Naive thymus-derived CD4-positive, alpha-beta T cell (primary cell): ENCODE measurements at regions of chr9 and their contacts with region 1.

Region 1: GRCh38 chr9:97632985-97633858 is at the starts of genes NCBP1 and TSTD2:
- DNase-seq: peak; percentile 89 to 97 (median 96)
- ATAC-seq: peak; percentile 91
- H3K4me3 ChIP-seq: peak within 1 kb of the TSS; percentile 78
- H3K4me3 Mint-ChIP-seq: peak within 1 kb of the TSS; percentile 86 to 100 (median 96)
- H3K27ac ChIP-seq: peak within 1 kb of the TSS; percentile 88
- H3K27ac Mint-ChIP-seq: peak within 1 kb of the TSS; percentile 98 to 100 (median 99)
- H3K4me1 ChIP-seq: peaks cover 37 to 43% of the 10 kb centered on the region in 2 donors
- H3K4me1 Mint-ChIP-seq: peaks cover 41 to 82% (median 65%) of the 10 kb centered on the region in 7 donors
- H3K27me3 ChIP-seq: no peaks in the 10 kb centered on the region
- H3K27me3 Mint-ChIP-seq: no peaks in the 10 kb centered on the region
- total RNA-seq, gene NCBP1: 33.8 to 42.2 (median 40.6) TPM
- total RNA-seq, gene TSTD2: 15.2 to 23.3 (median 18.6) TPM

Region 2: GRCh38 chr9:96449845-96450612 is 1183.2 kb before region 1 on chr9 and contains the start of gene HABP4:
- CTCF ChIA-PET with region 1: no interaction called
- POLR2A ChIA-PET with region 1: no interaction called
- intact Hi-C with region 1: loop called in 1 of 2 experiments (anchors 1 kb)
- DNase-seq: peak; percentile 90 to 97 (median 95)
- ATAC-seq: peak; percentile 98
- H3K4me3 ChIP-seq: peak within 1 kb of the TSS; percentile 77
- H3K4me3 Mint-ChIP-seq: peak within 1 kb of the TSS; percentile 88 to 99 (median 93)
- H3K27ac ChIP-seq: peak within 1 kb of the TSS; percentile 74
- H3K27ac Mint-ChIP-seq: peak within 1 kb of the TSS; percentile 74 to 98 (median 94)
- H3K4me1 ChIP-seq: peaks cover 5 to 14% of the 10 kb centered on the region in 2 donors
- H3K4me1 Mint-ChIP-seq: peaks cover 19 to 33% (median 26%) of the 10 kb centered on the region in 7 donors
- H3K27me3 ChIP-seq: no peaks in the 10 kb centered on the region
- H3K27me3 Mint-ChIP-seq: peaks cover 0 to 41% (median 6%) of the 10 kb centered on the region in 5 donors
- total RNA-seq, gene HABP4: 6.6 to 40.3 (median 23.9) TPM

Region 3: DNA sequence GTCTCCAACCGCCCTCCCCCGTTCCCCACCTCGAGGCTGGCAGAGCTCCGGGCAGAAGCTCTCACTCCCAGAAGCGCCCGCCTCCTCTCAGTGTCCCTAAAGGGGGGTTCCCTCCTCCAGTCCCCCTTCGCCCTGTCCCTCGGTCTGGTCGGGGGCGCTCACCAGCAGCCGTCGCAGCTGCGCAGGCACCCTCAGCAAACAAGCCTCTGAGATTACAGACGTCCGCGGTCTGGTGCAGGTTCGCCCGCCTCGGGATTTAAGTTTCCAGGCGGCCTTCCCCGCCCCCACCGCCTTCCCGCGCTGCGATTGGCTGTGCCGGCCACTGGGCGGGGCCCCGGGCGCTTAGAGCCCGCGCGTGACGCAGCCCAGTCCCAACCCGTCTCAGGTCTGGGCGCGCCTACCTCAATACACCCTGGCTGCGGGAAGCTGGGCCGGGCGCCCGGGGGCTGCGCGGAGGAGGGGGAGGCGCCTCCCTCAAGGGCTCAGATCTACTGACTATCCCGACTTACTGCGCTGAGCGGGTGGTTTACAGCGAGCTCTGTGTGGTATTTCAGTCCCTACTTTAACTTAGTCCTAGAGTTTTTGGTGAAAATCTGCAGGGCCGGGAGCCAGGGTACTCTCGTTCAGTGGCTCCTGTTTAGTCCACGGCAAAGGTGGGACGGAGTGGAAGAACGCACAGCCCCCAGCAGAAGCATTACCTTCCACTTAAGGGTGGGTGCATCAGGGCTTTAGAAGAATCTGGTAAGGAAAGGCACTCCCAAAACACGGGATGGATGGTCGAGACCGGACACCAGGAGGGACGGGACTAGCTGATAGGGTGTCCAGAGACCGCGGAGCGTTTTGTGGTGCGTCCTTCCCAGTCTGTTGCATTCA is 594.1 kb before region 1 on chr9 and contains the start of gene CTSV:
- CTCF ChIA-PET with region 1: no interaction called
- POLR2A ChIA-PET with region 1: no interaction called
- intact Hi-C with region 1: loop called in 1 of 2 experiments (anchors 1 kb)
- DNase-seq: peak; percentile 47 to 88 (median 60)
- ATAC-seq: peak; percentile 98
- H3K4me3 ChIP-seq: peak within 1 kb of the TSS; percentile 52
- H3K4me3 Mint-ChIP-seq: peak within 1 kb of the TSS; percentile 54 to 87 (median 79)
- H3K27ac ChIP-seq: no peak within 1 kb of the TSS
- H3K27ac Mint-ChIP-seq: peak within 1 kb of the TSS in 2 of 9 donors; percentile 49 to 84
- H3K4me1 ChIP-seq: no peaks in the 10 kb centered on the region
- H3K4me1 Mint-ChIP-seq: peaks cover 3 to 11% (median 9%) of the 10 kb centered on the region in 7 donors
- H3K27me3 ChIP-seq: no peaks in the 10 kb centered on the region
- H3K27me3 Mint-ChIP-seq: peaks cover 36 to 55% (median 47%) of the 10 kb centered on the region in 5 donors
- total RNA-seq, gene CTSV: 0.21 to 0.24 TPM in 2 of 5 experiments, not detected in the others

Region 4: DNA sequence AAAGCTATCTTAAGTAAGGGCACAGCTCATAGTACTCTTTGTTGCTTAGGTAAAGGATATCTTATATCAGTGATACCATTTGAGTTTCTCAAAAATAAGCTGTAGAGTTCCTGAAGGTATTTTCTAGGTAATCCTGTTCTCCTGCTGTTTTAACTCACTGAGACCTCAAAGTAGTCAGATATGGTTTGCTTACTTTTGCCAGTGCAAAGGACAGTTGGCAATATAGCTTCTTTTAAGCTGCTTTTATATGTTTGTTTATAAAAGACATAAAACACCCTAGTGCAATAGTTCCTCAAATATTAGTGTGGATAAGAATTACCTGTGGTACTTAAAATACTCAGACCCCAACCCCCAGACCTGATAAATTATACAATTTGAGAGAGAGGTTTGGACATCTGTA is 12.5 kb after region 1 on chr9:
- CTCF ChIA-PET with region 1: interaction called, 3 read pairs
- POLR2A ChIA-PET with region 1: interaction called, 16 read pairs
- intact Hi-C with region 1: loop called in 1 of 2 experiments (anchors 2 kb)
- DNase-seq: no peak
- ATAC-seq: no peak
- H3K4me3 ChIP-seq: no peak overlapping the region
- H3K4me3 Mint-ChIP-seq: no peak overlapping the region
- H3K27ac ChIP-seq: no peak overlapping the region
- H3K27ac Mint-ChIP-seq: peak overlapping the region in 1 of 9 donors; percentile 28
- H3K4me1 ChIP-seq: no peaks in the 10 kb centered on the region
- H3K4me1 Mint-ChIP-seq: peaks cover 6 to 16% (median 11%) of the 10 kb centered on the region in 7 donors
- H3K27me3 ChIP-seq: no peaks in the 10 kb centered on the region
- H3K27me3 Mint-ChIP-seq: no peaks in the 10 kb centered on the region

Region 5: GRCh38 chr9:97675655-97676054 is 42.4 kb after region 1 on chr9:
- CTCF ChIA-PET with region 1: no interaction called
- POLR2A ChIA-PET with region 1: no interaction called
- intact Hi-C with region 1: no loop called
- DNase-seq: no peak
- ATAC-seq: no peak
- H3K4me3 ChIP-seq: no peak overlapping the region
- H3K4me3 Mint-ChIP-seq: no peak overlapping the region
- H3K27ac ChIP-seq: no peak overlapping the region
- H3K27ac Mint-ChIP-seq: peak overlapping the region in 2 of 9 donors; percentile 10 to 69
- H3K4me1 ChIP-seq: no peaks in the 10 kb centered on the region
- H3K4me1 Mint-ChIP-seq: peaks cover 0 to 20% (median 6%) of the 10 kb centered on the region in 7 donors
- H3K27me3 ChIP-seq: no peaks in the 10 kb centered on the region
- H3K27me3 Mint-ChIP-seq: no peaks in the 10 kb centered on the region

Region 6: DNA sequence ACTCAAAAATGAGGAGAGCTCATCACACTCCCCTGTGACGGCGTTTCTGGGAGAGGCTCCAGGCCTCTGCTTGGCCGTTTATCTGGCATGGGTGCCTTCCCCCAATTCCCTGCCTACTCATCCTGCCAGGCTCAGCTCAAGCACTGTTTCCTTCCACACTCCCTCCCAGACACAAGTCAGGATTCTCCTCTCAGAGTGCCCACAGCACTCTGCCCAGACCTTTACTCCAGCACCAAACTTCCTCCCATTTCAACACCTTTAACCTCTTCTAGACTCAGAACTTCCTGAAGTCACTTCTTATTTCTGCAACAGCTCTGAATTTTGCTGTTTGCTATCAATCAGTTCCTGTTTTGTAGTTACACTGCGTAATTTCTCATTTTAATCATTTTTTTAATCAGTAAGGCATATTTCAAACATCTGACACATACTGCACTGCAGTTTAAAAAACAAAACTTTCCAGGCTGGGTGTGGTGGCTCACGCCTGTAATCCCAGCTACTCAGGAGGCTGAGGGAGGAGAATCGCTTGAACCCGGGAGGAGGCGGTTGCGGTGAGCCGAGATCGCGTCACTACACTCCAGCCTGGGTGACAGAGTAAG is 273.1 kb after region 1 on chr9:
- CTCF ChIA-PET with region 1: no interaction called
- POLR2A ChIA-PET with region 1: interaction called, 4 read pairs
- intact Hi-C with region 1: loop called (anchors 2 to 5 kb)
- DNase-seq: peak in 7 of 9 donors; percentile 68 to 89 (median 79)
- ATAC-seq: peak; percentile 58
- H3K4me3 ChIP-seq: peak overlapping the region; percentile 51
- H3K4me3 Mint-ChIP-seq: peak overlapping the region; percentile 80 to 98 (median 92)
- H3K27ac ChIP-seq: peak overlapping the region; percentile 95
- H3K27ac Mint-ChIP-seq: peak overlapping the region; percentile 92 to 100 (median 98)
- H3K4me1 ChIP-seq: peaks cover 74 to 79% of the 10 kb centered on the region in 2 donors
- H3K4me1 Mint-ChIP-seq: peaks cover 61 to 94% (median 87%) of the 10 kb centered on the region in 7 donors
- H3K27me3 ChIP-seq: no peaks in the 10 kb centered on the region
- H3K27me3 Mint-ChIP-seq: no peaks in the 10 kb centered on the region

Region 7: GRCh38 chr9:98255578-98256296 is 622.5 kb after region 1 on chr9 and contains the start of gene TBC1D2:
- CTCF ChIA-PET with region 1: no interaction called
- POLR2A ChIA-PET with region 1: interaction called, 4 read pairs
- intact Hi-C with region 1: loop called in 1 of 2 experiments (anchors 1 kb)
- DNase-seq: peak; percentile 96 to 98 (median 98)
- ATAC-seq: peak; percentile 96
- H3K4me3 ChIP-seq: peak within 1 kb of the TSS; percentile 80
- H3K4me3 Mint-ChIP-seq: peak within 1 kb of the TSS; percentile 96 to 99 (median 97)
- H3K27ac ChIP-seq: peak within 1 kb of the TSS; percentile 78
- H3K27ac Mint-ChIP-seq: peak within 1 kb of the TSS; percentile 90 to 99 (median 97)
- H3K4me1 ChIP-seq: peaks cover 11 to 23% of the 10 kb centered on the region in 2 donors
- H3K4me1 Mint-ChIP-seq: peaks cover 24 to 45% (median 32%) of the 10 kb centered on the region in 7 donors
- H3K27me3 ChIP-seq: no peaks in the 10 kb centered on the region
- H3K27me3 Mint-ChIP-seq: peaks cover 0 to 13% (median 0%) of the 10 kb centered on the region in 5 donors
- total RNA-seq, gene TBC1D2: 4.9 to 16.6 (median 8.8) TPM